Activated naive CD4-positive, alpha-beta T cell treated with anti-CD3 and anti-CD28 coated beads for 36 hours (primary cell): ENCODE measurements at regions of chr18 and their contacts with region 1.

Region 1: GRCh38 chr18:47870605-47871004 is 59.9 kb downstream of the SMAD2 start:
- DNase-seq: no peak
- H3K4me3 Mint-ChIP-seq: no peak overlapping the region
- H3K27ac Mint-ChIP-seq: no peak overlapping the region
- H3K4me1 Mint-ChIP-seq: peaks cover 40% of the 10 kb centered on the region
- H3K27me3 Mint-ChIP-seq: no peaks in the 10 kb centered on the region

Region 2: DNA sequence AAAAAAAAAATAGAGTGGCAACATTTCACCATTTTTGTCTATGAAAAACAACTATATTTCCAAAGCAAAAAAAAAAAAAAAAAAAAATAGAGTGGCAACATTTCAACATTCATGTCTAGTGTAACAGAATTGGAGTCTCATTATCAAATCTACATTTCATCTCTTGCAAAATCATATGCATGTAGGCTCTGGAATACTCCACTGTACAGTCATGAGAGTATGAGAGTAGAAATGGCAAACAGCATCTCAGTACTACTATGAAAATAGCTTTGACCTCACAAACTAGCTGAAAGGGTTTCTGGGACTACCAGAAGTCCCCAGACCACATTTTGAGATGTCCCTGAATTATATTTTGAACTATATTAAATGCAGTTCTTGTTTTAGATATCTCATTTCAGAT is 23.0 kb before region 1 on chr18:
- CTCF ChIA-PET with region 1: no interaction called
- intact Hi-C with region 1: loop called (anchors 2 kb)
- DNase-seq: no peak
- H3K4me3 Mint-ChIP-seq: no peak overlapping the region
- H3K27ac Mint-ChIP-seq: no peak overlapping the region
- H3K4me1 Mint-ChIP-seq: no peaks in the 10 kb centered on the region
- H3K27me3 Mint-ChIP-seq: no peaks in the 10 kb centered on the region

Region 3: DNA sequence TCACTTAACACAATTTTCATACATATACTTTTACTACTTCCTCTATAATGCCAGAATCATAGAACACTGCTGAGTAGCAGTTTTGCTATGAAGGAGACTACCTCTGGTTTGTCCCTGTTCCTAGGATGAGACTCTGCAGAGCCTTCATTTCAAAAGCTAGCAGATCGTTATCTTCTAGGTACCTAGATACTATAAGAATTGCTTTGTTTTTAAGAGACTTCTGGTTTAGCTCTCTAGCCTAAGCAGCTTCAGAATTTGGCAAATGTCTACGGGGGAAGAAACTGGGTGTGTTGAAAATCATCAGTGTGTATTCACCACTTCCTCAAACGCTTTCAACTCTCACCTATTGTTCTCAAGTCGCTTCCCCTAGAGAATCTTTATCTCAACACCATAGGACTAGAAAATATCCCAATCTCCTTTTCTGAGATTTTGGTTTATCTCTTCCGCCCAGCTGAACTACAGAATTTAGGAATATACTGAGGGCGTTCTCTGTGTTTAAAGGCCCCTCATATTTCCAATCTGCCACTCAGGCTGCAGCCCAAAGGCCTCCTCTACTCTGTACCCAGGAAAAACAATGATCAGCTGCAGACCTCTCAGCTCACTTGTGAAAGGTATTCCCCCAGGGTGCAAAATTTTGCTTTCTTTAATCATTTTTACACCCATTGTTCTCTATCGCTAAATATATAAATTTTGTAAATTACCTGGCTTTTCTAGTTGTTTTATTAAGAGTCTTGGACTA is 31.2 kb after region 1 on chr18:
- CTCF ChIA-PET with region 1: no interaction called
- intact Hi-C with region 1: loop called (anchors 2 kb)
- DNase-seq: no peak
- H3K4me3 Mint-ChIP-seq: peak overlapping the region; percentile 19
- H3K27ac Mint-ChIP-seq: peak overlapping the region; percentile 67
- H3K4me1 Mint-ChIP-seq: peaks cover 74% of the 10 kb centered on the region
- H3K27me3 Mint-ChIP-seq: no peaks in the 10 kb centered on the region